Activated CD4-positive, alpha-beta T cell treated with anti-CD3 and anti-CD28 coated beads, Interleukin-2, amount 10 ng/mL, durations not matched to agents 24 days and 14 days (primary cell): ENCODE measurements at regions of chr6 and their contacts with region 1.

Region 1: DNA sequence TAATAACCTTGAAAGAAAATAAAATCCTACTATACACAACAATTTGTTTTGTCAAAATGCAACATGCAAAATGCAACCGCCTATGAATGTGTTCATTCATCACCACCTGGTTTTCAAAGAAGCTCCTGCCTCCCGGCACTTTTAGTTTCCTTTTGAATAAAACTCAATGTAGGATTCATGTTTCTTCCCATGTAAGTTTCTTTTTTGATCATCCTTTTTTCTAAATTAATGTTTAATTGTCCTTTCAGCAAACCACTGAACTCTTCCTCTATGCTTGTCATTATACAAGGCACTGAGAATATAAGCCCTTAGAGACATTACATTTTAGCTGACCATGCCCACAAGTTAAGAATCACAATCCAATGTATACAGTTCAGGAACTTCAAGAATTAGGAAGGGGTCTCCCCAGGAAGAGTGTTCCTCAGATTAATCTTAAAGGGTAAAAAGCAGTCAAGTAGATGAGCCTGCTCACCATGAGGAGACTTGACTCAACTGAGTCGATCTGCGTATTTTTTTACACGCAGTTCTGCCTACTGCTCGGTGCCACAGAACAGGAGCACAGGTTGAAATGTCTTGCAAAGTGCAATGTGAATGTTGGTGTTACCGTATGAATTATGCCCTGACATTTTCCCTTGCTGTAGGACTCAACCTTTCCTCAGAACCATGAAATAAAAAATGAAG is 7.2 kb upstream of the THEMIS start:
- DNase-seq: peak; percentile 71
- H3K4me3 Mint-ChIP-seq: peak overlapping the region; percentile 57
- H3K27ac Mint-ChIP-seq: peak overlapping the region; percentile 83
- H3K4me1 Mint-ChIP-seq: peaks cover 31% of the 10 kb centered on the region
- H3K27me3 Mint-ChIP-seq: no peaks in the 10 kb centered on the region

Region 2: DNA sequence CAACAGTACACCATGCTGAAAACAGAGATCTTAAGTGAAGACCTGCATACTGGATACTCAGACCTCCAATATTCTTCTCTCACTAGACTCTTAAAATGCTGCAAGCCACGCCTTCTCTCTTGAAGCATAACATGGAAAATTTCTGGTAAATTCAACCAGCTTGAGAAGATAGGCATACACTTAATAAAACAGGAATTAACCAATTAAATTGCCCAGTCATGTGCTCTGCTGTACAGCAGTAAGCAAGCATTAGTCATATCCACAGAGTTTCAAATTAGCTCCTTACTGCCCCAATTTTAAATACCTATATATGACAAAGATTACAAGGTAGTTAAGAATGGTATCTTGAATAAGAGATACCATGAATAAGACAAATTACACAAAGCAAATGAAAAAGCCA is 277.3 kb before region 1 on chr6:
- intact Hi-C with region 1: no loop called
- DNase-seq: no peak
- H3K4me3 Mint-ChIP-seq: no peak overlapping the region
- H3K27ac Mint-ChIP-seq: no peak overlapping the region
- H3K4me1 Mint-ChIP-seq: no peaks in the 10 kb centered on the region
- H3K27me3 Mint-ChIP-seq: peaks cover 2% of the 10 kb centered on the region

Region 3: GRCh38 chr6:127748290-127748689 is 159.8 kb before region 1 on chr6:
- intact Hi-C with region 1: no loop called
- DNase-seq: no peak
- H3K4me3 Mint-ChIP-seq: no peak overlapping the region
- H3K27ac Mint-ChIP-seq: peak overlapping the region; percentile 79
- H3K4me1 Mint-ChIP-seq: peaks cover 18% of the 10 kb centered on the region
- H3K27me3 Mint-ChIP-seq: no peaks in the 10 kb centered on the region

Region 4: DNA sequence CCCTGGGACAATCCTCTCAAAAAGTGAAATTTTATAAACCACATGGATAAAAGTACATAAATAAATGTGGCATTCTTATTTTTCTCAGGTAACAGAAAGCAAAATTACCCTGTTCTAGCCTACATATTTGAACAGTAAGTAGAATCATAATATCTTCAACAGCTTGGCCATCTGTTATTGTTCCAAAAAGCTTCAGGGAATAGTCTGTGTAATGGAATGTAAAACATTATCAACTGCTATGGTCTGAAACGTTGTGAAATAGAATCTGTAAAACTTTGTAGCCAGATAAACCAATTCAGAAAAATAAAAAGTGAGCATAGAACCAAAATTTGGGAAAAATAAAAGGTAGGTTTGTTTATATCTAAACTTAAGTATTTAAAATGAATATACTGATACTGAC is 122.0 kb before region 1 on chr6:
- intact Hi-C with region 1: no loop called
- DNase-seq: no peak
- H3K4me3 Mint-ChIP-seq: no peak overlapping the region
- H3K27ac Mint-ChIP-seq: no peak overlapping the region
- H3K4me1 Mint-ChIP-seq: peaks cover 27% of the 10 kb centered on the region
- H3K27me3 Mint-ChIP-seq: no peaks in the 10 kb centered on the region

Region 5: GRCh38 chr6:127893541-127893940 is 14.6 kb before region 1 on chr6:
- intact Hi-C with region 1: loop called (anchors 1 kb)
- DNase-seq: no peak
- H3K4me3 Mint-ChIP-seq: peak overlapping the region; percentile 85
- H3K27ac Mint-ChIP-seq: peak overlapping the region; percentile 91
- H3K4me1 Mint-ChIP-seq: peaks cover 39% of the 10 kb centered on the region
- H3K27me3 Mint-ChIP-seq: no peaks in the 10 kb centered on the region

Region 6: GRCh38 chr6:127918506-127919427 is 10.7 kb after region 1 on chr6:
- intact Hi-C with region 1: loop called (anchors 1 kb)
- DNase-seq: peak; percentile 79
- H3K4me3 Mint-ChIP-seq: peak overlapping the region; percentile 52
- H3K27ac Mint-ChIP-seq: peak overlapping the region; percentile 61
- H3K4me1 Mint-ChIP-seq: peaks cover 55% of the 10 kb centered on the region
- H3K27me3 Mint-ChIP-seq: no peaks in the 10 kb centered on the region

Region 7: GRCh38 chr6:127938701-127939100 is 30.6 kb after region 1 on chr6:
- intact Hi-C with region 1: loop called (anchors 1 kb)
- DNase-seq: no peak
- H3K4me3 Mint-ChIP-seq: no peak overlapping the region
- H3K27ac Mint-ChIP-seq: peak overlapping the region; percentile 61
- H3K4me1 Mint-ChIP-seq: peaks cover 46% of the 10 kb centered on the region
- H3K27me3 Mint-ChIP-seq: no peaks in the 10 kb centered on the region

Region 8: DNA sequence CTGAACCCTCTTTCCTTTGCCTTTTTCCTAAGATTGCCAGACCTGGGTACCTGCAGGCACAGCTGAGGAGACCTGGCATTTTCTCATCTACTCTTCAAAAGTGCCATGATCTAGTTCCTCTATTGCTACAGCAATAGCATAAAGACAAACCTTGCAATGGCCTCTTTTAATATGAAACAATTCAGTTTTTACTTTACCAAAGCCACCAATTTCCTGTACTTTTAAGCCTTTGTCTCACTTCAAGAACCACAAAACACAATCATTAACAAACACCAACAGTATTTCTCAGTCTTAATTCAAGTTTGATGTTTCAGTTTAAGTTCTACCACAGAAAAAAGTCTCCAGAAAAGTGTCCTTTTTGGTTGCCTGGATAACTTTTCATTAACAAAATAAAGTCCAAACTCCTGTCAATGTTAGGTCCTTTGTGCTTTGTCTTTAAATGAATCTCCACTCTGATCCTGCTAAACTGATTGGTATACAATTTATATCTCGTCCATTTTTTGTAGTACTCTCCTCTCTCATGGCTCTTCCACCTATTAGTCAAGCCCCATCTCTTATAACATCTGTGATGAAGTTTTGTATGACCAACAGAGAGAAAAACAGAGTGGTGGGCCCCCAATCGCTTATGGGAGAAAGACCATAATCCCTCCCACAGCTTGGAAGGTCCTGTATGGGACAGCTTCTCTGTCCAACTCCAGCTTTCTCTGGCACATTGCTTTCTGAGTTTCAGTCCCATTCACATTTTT is 43.2 kb after region 1 on chr6:
- intact Hi-C with region 1: loop called (anchors 1 kb)
- DNase-seq: peak; percentile 67
- H3K4me3 Mint-ChIP-seq: peak overlapping the region; percentile 67
- H3K27ac Mint-ChIP-seq: peak overlapping the region; percentile 95
- H3K4me1 Mint-ChIP-seq: peaks cover 56% of the 10 kb centered on the region
- H3K27me3 Mint-ChIP-seq: no peaks in the 10 kb centered on the region